Activated T-helper 2 cell treated with anti-CD3 and anti-CD28 coated beads, Interferon-gamma antibody, Interleukin-2, Interleukin-4, amounts not matched to agents 10 μg/mL and 5 μg/mL and 100 μg/mL, durations not matched to agents 14 hours and 24 hours and 36 hours (primary cell): ENCODE measurements at regions of chr15 and their contacts with region 1.

Region 1: GRCh38 chr15:56042982-56043980 is 49.9 kb upstream of the NEDD4 start:
- DNase-seq: peak; percentile 12
- H3K4me3 Mint-ChIP-seq: peak overlapping the region; percentile 35
- H3K27ac Mint-ChIP-seq: peak overlapping the region; percentile 80
- H3K4me1 Mint-ChIP-seq: peaks cover 32% of the 10 kb centered on the region
- H3K27me3 Mint-ChIP-seq: peaks cover 4% of the 10 kb centered on the region

Region 2: DNA sequence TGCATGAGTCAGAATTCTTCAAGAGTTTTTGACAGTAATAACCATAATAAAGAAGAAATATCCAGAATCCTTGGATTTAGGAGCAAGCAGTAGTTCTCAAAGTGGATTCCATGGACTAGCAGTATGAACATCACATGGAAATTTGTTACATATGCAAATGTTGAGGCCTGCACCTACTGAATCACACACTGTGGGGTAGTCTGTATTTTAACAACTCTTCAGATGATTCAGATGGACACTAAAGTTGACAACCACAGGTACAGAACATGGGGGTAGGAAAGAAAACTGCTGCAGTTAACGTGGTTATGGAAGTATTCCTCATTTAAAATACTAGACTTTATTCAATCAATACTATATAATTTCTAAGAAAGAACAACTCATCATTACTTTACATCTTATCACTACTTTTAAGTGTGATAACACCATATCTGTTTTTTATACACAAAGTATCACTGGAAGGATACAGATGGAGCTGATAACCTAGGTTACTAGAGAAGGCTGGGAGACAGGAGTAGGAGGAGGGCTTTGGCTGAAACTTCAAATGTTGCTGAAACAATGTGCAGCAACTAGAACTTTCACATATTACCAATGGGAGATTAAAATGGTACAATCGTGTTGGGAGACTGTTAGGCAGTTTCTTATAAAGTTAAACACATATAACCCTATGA is 61.6 kb before region 1 on chr15:
- intact Hi-C with region 1: loop called (anchors 1 kb)
- DNase-seq: no peak
- H3K4me3 Mint-ChIP-seq: no peak overlapping the region
- H3K27ac Mint-ChIP-seq: peak overlapping the region; percentile 20
- H3K4me1 Mint-ChIP-seq: peaks cover 8% of the 10 kb centered on the region
- H3K27me3 Mint-ChIP-seq: no peaks in the 10 kb centered on the region

Region 3: GRCh38 chr15:55993111-55993803 is 50.0 kb before region 1 on chr15 and contains the start of gene NEDD4:
- intact Hi-C with region 1: loop called (anchors 2 kb)
- DNase-seq: peak; percentile 68
- H3K4me3 Mint-ChIP-seq: peak within 1 kb of the TSS; percentile 85
- H3K27ac Mint-ChIP-seq: peak within 1 kb of the TSS; percentile 12
- H3K4me1 Mint-ChIP-seq: peaks cover 13% of the 10 kb centered on the region
- H3K27me3 Mint-ChIP-seq: peaks cover 34% of the 10 kb centered on the region
- total RNA-seq, gene NEDD4: 10.2 and 13.9 TPM in 2 replicates

Region 4: DNA sequence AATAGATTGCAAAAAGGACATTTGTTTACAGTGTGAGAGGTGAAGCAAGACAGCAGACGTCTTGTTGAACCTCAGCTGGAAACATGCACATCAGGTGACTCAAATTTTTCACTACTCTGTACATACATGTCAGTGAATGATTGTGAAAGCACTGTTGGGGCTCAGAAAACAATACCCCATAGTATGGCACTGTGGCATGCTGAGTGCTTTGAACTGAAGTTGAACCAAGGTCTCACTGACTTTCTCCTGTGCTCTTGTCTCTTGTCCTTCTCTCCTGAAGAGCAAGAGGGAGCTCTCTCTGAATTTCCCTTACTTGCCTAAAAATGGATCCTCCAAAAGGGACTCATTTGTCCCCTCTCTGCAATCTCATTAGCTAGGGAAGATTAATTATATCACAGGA is 25.4 kb before region 1 on chr15:
- intact Hi-C with region 1: no loop called
- DNase-seq: no peak
- H3K4me3 Mint-ChIP-seq: no peak overlapping the region
- H3K27ac Mint-ChIP-seq: no peak overlapping the region
- H3K4me1 Mint-ChIP-seq: no peaks in the 10 kb centered on the region
- H3K27me3 Mint-ChIP-seq: peaks cover 20% of the 10 kb centered on the region

Region 5: DNA sequence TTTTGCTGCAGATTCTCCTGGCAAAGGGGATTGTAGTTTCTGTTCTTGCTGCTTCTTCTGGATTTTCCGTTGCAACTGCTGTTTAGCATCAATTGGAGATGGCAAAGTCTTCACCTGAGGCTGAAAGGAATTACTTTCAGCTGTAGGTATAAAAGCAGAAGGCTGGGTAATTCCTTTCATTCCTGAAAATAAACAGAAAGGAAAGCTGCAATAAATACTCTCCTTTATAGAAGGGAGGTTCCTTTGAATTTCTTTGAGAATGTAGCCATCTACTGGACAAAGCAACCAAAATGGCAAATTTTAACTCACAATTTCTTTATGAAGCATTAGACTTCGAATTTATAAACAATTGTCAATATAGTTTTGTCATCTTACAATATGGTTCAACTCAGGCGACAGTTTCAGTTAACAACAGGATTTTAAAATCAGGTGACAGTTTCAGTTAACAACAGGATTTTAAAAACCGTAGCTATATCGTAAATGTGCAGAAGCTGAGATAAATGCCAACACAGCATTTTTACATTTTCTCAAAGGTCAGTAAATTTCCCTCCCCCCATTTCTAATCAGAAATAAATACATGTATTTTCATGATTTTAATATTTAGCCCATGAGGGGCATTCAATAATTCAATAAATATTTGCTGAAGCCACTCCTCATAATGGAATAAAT is 55.0 kb after region 1 on chr15:
- intact Hi-C with region 1: no loop called
- DNase-seq: no peak
- H3K4me3 Mint-ChIP-seq: no peak overlapping the region
- H3K27ac Mint-ChIP-seq: no peak overlapping the region
- H3K4me1 Mint-ChIP-seq: no peaks in the 10 kb centered on the region
- H3K27me3 Mint-ChIP-seq: no peaks in the 10 kb centered on the region